CD8-positive, alpha-beta T cell (primary cell): ENCODE measurements at regions of chr13 and their contacts with region 1.

Region 1: DNA sequence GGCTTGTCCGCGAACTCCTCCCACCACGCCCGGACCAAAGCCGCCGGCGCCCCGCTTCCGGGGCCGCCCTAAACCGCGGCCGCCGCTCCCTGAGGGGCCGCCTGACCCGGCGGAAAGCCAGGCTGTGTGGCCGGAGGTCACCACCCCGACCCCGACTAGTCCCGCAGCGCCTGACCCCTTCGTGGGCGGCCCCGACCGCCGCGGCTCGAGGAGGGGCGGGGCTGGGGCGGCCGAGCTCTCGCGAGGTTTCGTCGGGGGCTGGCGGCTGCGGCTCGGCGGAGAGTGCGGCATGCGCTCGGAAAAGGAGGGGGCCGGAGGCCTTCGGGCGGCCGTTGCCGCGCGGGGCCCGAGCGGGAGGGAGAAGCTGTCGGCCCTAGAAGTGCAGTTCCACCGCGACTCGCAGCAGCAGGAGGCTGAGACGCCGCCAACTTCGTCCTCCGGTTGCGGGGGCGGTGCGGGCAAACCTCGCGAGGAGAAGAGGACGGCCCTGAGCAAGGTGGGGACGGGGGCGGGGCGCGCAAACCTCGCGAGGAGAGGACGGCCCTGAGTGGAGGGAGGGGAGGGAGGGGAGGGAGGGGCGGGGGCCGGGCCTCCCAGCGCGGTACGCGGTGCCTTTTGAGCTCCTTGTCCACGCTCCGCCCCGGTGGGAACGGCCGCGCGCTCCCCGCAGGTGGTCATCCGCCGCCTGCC is at the start of gene UPF3A:
- DNase-seq: peak; percentile 77 to 96 (median 88)
- ATAC-seq: peak; percentile 82
- H3K4me3 ChIP-seq: peak within 1 kb of the TSS; percentile 77 to 89
- H3K4me3 Mint-ChIP-seq: peak within 1 kb of the TSS; percentile 91
- H3K27ac ChIP-seq: peak within 1 kb of the TSS; percentile 79 to 82
- H3K27ac Mint-ChIP-seq: peak within 1 kb of the TSS; percentile 94
- H3K4me1 ChIP-seq: peaks cover 47% of the 10 kb centered on the region
- H3K4me1 Mint-ChIP-seq: peaks cover 52% of the 10 kb centered on the region
- H3K27me3 ChIP-seq: no peaks in the 10 kb centered on the region
- H3K27me3 Mint-ChIP-seq: no peaks in the 10 kb centered on the region
- CTCF ChIP-seq: no peak
- total RNA-seq, gene UPF3A: 33.3 to 37.0 TPM

Region 2: GRCh38 chr13:113393563-113394338 is 887.7 kb before region 1 on chr13:
- CTCF ChIA-PET with region 1: no interaction called
- POLR2A ChIA-PET with region 1: no interaction called
- intact Hi-C with region 1: no loop called
- DNase-seq: peak; percentile 66 to 88 (median 81)
- ATAC-seq: peak; percentile 96
- H3K4me3 ChIP-seq: peak overlapping the region; percentile 61 to 67
- H3K4me3 Mint-ChIP-seq: peak overlapping the region; percentile 87
- H3K27ac ChIP-seq: no peak overlapping the region
- H3K27ac Mint-ChIP-seq: peak overlapping the region; percentile 72
- H3K4me1 ChIP-seq: peaks cover 8% of the 10 kb centered on the region
- H3K4me1 Mint-ChIP-seq: peaks cover 3% of the 10 kb centered on the region
- H3K27me3 ChIP-seq: no peaks in the 10 kb centered on the region
- H3K27me3 Mint-ChIP-seq: no peaks in the 10 kb centered on the region
- CTCF ChIP-seq: peak; percentile 77

Region 3: GRCh38 chr13:114194853-114195252 is 86.6 kb before region 1 on chr13:
- CTCF ChIA-PET with region 1: no interaction called
- POLR2A ChIA-PET with region 1: no interaction called
- intact Hi-C with region 1: no loop called
- DNase-seq: peak in 2 of 9 experiments; percentile 30 to 61
- ATAC-seq: peak; percentile 81
- H3K4me3 ChIP-seq: no peak overlapping the region
- H3K4me3 Mint-ChIP-seq: peak overlapping the region; percentile 8
- H3K27ac ChIP-seq: peak overlapping the region in 1 of 2 experiments; percentile 57
- H3K27ac Mint-ChIP-seq: peak overlapping the region; percentile 60
- H3K4me1 ChIP-seq: peaks cover 18% of the 10 kb centered on the region
- H3K4me1 Mint-ChIP-seq: peaks cover 20% of the 10 kb centered on the region
- H3K27me3 ChIP-seq: no peaks in the 10 kb centered on the region
- H3K27me3 Mint-ChIP-seq: no peaks in the 10 kb centered on the region
- CTCF ChIP-seq: no peak

Region 4: DNA sequence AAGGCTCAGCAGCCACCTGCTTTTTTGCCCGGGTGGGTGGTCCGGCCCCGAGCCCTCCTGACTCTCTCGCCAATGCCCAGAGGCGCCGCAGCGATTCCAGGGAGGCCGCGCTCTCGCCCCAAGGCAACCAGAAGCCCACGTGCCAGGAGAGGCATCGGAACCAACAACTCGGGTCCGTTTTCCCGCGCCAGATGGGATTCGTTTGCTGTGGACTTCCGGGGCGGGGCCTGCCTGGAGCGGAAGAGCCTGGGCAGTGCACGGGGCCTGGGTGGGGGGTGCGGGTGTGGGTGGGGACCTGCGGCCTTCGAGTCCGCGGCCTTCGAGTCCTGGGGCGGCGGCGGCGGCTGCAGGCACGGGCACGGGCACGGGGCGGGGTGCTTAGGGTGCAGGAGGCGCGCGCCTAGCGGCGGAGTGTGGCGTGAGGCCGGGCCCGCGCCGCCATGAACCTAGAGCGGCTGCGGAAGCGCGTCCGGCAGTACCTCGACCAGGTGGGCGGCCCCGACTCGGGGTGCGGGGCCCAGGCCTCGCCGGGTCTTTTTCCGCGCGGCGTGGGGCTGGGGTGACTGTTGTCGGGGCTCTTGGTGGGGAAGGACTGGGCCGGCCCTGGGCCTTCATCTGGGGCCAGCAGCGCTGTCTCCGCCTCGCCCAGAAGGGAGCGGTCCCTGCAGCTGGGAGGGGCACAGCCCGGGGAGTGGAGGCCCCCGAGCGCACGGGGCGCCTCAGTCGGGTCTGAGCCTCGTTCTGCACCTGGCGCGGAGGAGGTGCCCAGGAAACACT is 46.7 kb before region 1 on chr13 and contains the start of gene CDC16:
- CTCF ChIA-PET with region 1: interaction called, 3 read pairs
- POLR2A ChIA-PET with region 1: no interaction called
- intact Hi-C with region 1: loop called (anchors 1 to 2 kb)
- DNase-seq: peak; percentile 57 to 93 (median 83)
- ATAC-seq: peak; percentile 84
- H3K4me3 ChIP-seq: peak within 1 kb of the TSS; percentile 76 to 80
- H3K4me3 Mint-ChIP-seq: peak within 1 kb of the TSS; percentile 88
- H3K27ac ChIP-seq: peak within 1 kb of the TSS; percentile 61 to 62
- H3K27ac Mint-ChIP-seq: peak within 1 kb of the TSS; percentile 91
- H3K4me1 ChIP-seq: peaks cover 17% of the 10 kb centered on the region
- H3K4me1 Mint-ChIP-seq: peaks cover 29% of the 10 kb centered on the region
- H3K27me3 ChIP-seq: no peaks in the 10 kb centered on the region
- H3K27me3 Mint-ChIP-seq: peaks cover 5% of the 10 kb centered on the region
- CTCF ChIP-seq: peak; percentile 37
- total RNA-seq, gene CDC16: 55.6 to 56.2 TPM

Region 5: GRCh38 chr13:114298866-114299265 is 17.4 kb after region 1 on chr13:
- CTCF ChIA-PET with region 1: no interaction called
- POLR2A ChIA-PET with region 1: no interaction called
- intact Hi-C with region 1: no loop called
- DNase-seq: no peak
- ATAC-seq: no peak
- H3K4me3 ChIP-seq: no peak overlapping the region
- H3K4me3 Mint-ChIP-seq: no peak overlapping the region
- H3K27ac ChIP-seq: no peak overlapping the region
- H3K27ac Mint-ChIP-seq: no peak overlapping the region
- H3K4me1 ChIP-seq: no peaks in the 10 kb centered on the region
- H3K4me1 Mint-ChIP-seq: no peaks in the 10 kb centered on the region
- H3K27me3 ChIP-seq: no peaks in the 10 kb centered on the region
- H3K27me3 Mint-ChIP-seq: no peaks in the 10 kb centered on the region
- CTCF ChIP-seq: no peak

Region 6: GRCh38 chr13:114314074-114314912 is 32.8 kb after region 1 on chr13 and contains the start of gene CHAMP1:
- CTCF ChIA-PET with region 1: interaction called, 4 read pairs
- POLR2A ChIA-PET with region 1: interaction called, 7 read pairs
- intact Hi-C with region 1: loop called (anchors 1 kb)
- DNase-seq: peak; percentile 69 to 95 (median 88)
- ATAC-seq: peak; percentile 84
- H3K4me3 ChIP-seq: peak within 1 kb of the TSS; percentile 57 to 77
- H3K4me3 Mint-ChIP-seq: peak within 1 kb of the TSS; percentile 86
- H3K27ac ChIP-seq: peak within 1 kb of the TSS; percentile 72 to 77
- H3K27ac Mint-ChIP-seq: peak within 1 kb of the TSS; percentile 87
- H3K4me1 ChIP-seq: peaks cover 22% of the 10 kb centered on the region
- H3K4me1 Mint-ChIP-seq: peaks cover 42% of the 10 kb centered on the region
- H3K27me3 ChIP-seq: no peaks in the 10 kb centered on the region
- H3K27me3 Mint-ChIP-seq: no peaks in the 10 kb centered on the region
- CTCF ChIP-seq: no peak
- total RNA-seq, gene CHAMP1: 10.8 to 14.2 TPM